Endothelial cell of umbilical vein (primary cell): ENCODE measurements at regions of chr11 and their contacts with region 1.

Region 1: DNA sequence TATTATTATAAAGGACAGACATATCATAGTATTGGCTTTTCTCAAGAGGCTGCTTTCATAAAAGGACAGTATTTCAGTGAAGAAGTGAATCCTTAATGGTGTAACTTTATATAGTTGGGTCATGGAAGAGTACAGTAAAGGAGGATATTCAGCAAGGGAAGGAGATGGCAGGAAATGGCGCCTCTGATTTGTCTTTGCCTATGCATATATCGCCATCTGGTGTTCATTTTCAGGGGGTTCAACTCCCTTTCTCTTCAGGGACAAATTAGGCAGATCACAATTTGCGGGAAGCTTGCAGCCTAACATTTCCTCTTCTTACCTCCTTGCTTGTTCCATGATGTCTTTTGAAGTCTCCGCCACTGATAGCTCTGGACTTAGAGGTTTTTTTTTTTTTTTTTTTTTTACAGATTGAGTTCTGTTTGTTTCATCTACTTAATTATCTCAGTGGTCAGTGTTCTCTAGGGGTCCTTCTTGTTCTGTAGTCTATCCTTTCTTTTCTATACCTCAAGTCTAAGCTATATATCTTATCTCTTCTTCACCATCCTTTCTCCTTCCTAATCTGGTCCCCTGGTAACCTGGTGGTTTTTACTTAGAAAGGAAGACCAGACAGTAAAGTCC is 21.8 kb upstream of the RRM1 start:
- DNase-seq: peak; percentile 79
- H3K4me3 ChIP-seq: no peak overlapping the region
- H3K27ac ChIP-seq: no peak overlapping the region
- H3K4me1 ChIP-seq: no peaks in the 10 kb centered on the region
- H3K27me3 ChIP-seq: no peaks in the 10 kb centered on the region
- CTCF ChIP-seq: peak; percentile 59 to 64
- POLR2A ChIP-seq: no peak

Region 2: GRCh38 chr11:3824714-3825472 is 247.9 kb before region 1 on chr11:
- CTCF ChIA-PET with region 1: interaction called, 5 read pairs
- POLR2A ChIA-PET with region 1: no interaction called
- dilution Hi-C with region 1: no loop called
- intact Hi-C with region 1: loop called (anchors 1 kb)
- DNase-seq: peak; percentile 44
- H3K4me3 ChIP-seq: no peak overlapping the region
- H3K27ac ChIP-seq: no peak overlapping the region
- H3K4me1 ChIP-seq: no peaks in the 10 kb centered on the region
- H3K27me3 ChIP-seq: no peaks in the 10 kb centered on the region
- CTCF ChIP-seq: peak; percentile 74
- POLR2A ChIP-seq: no peak

Region 3: DNA sequence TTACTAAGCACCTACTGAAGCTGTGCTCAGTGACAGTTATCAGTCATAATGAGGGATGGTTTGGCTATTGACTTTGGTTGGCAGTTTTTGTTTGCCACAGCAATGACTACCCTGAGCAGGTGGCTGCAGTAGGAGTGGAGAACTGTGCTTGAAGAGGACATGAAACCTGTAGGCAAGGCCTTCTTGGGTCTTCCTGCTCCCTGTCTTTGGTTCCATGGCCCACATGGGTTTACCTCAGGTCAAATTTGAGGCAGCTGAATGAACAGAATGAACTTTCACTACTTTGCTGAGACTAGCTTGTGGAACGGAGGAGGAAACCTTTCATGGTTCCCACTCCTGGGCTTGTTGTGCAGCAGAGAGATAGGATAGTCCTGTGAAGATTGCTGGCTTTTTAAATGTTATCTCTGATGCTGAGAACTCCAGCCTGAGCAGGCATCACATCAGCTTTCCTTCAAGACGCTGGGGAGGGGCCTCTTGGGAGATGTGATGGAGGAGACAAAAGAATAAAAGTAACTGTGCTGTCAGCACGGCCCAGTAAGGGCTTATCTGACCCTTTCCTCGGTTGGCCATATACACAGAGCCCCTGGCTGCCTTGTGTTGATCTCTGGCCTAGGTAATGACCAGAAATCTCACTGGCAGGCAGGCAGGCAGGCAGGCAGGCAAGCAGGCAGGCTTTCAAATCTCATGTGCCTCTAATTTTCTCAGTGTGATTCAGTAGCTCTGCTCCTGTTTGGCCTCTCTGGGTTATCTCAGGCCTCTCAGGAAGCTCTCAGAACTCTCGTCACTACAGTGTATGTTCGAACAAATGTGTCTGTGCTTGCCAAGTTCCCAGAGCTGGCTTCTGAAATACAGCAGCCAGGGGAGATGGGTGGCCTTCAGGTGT is 205.3 kb before region 1 on chr11:
- CTCF ChIA-PET with region 1: interaction called, 13 read pairs
- POLR2A ChIA-PET with region 1: no interaction called
- dilution Hi-C with region 1: loop called (anchors 25 kb)
- intact Hi-C with region 1: no loop called
- DNase-seq: peak; percentile 76
- H3K4me3 ChIP-seq: no peak overlapping the region
- H3K27ac ChIP-seq: peak overlapping the region; percentile 78
- H3K4me1 ChIP-seq: peaks cover 38% of the 10 kb centered on the region
- H3K27me3 ChIP-seq: no peaks in the 10 kb centered on the region
- CTCF ChIP-seq: no peak
- POLR2A ChIP-seq: no peak

Region 4: DNA sequence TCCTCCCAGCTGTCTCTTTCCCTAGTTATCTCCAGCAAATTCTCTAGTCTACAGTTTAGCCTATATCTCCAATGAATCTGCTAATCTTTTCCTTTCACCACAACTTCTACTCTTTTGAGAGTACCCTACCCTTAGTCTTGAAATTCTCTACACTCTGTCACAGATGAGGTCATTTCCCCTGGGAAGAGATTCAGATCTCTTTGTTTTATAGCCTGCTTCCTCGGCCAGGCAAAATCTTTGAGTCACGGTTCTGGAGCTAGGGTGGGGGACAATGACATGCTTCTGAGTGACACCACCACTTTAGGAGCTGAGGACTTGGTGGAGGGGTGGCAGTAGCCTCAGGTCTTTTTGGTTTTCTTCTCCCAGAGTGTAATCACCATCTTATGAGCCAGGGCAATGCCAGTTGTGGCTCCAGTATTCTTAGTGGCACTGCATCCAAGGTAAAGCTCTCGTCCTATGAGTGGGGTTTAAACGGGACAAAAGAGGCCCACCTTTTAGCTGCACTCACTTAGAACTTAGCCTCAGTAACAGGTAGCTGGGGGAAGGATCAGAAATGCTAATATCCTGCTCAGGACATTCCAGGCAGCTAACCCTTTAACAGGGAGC is 76.7 kb before region 1 on chr11:
- CTCF ChIA-PET with region 1: interaction called, 10 read pairs
- POLR2A ChIA-PET with region 1: no interaction called
- dilution Hi-C with region 1: no loop called
- intact Hi-C with region 1: loop called (anchors 5 kb)
- DNase-seq: peak; percentile 82
- H3K4me3 ChIP-seq: no peak overlapping the region
- H3K27ac ChIP-seq: peak overlapping the region; percentile 68
- H3K4me1 ChIP-seq: peaks cover 16% of the 10 kb centered on the region
- H3K27me3 ChIP-seq: no peaks in the 10 kb centered on the region
- CTCF ChIP-seq: no peak
- POLR2A ChIP-seq: no peak

Region 5: GRCh38 chr11:4087551-4087950 is 14.8 kb after region 1 on chr11:
- CTCF ChIA-PET with region 1: interaction called, 12 read pairs
- POLR2A ChIA-PET with region 1: no interaction called
- dilution Hi-C with region 1: no loop called
- intact Hi-C with region 1: no loop called
- DNase-seq: no peak
- H3K4me3 ChIP-seq: no peak overlapping the region
- H3K27ac ChIP-seq: no peak overlapping the region
- H3K4me1 ChIP-seq: no peaks in the 10 kb centered on the region
- H3K27me3 ChIP-seq: no peaks in the 10 kb centered on the region
- CTCF ChIP-seq: peak in 1 of 2 donors; percentile 6
- POLR2A ChIP-seq: no peak